ENCODE measurements at regions of chr21 and their contacts with region 1.

Region 1: GRCh38 chr21:26783466-26784195 is 61.6 kb downstream of the ADAMTS1 start:
- DNase-seq: no peak
- ATAC-seq: no peak
- H3K4me3 ChIP-seq: no peak overlapping the region
- H3K27ac ChIP-seq: peak overlapping the region; percentile 59 to 74 (median 60)
- H3K4me1 ChIP-seq: peaks cover 6 to 22% of the 10 kb centered on the region in 2 donors
- H3K27me3 ChIP-seq: no peaks in the 10 kb centered on the region
- CTCF ChIP-seq: no peak
- POLR2A ChIP-seq: no peak

Region 2: GRCh38 chr21:26801524-26801923 is 17.9 kb after region 1 on chr21:
- in situ Hi-C with region 1: no loop called
- intact Hi-C with region 1: loop called (anchors 2 kb)
- DNase-seq: no peak
- ATAC-seq: peak in 1 of 2 donors; percentile 31
- H3K4me3 ChIP-seq: peak overlapping the region in 2 of 4 donors; percentile 29 to 32
- H3K27ac ChIP-seq: peak overlapping the region; percentile 57 to 77 (median 69)
- H3K4me1 ChIP-seq: peaks cover 12 to 15% of the 10 kb centered on the region in 2 donors
- H3K27me3 ChIP-seq: no peaks in the 10 kb centered on the region
- CTCF ChIP-seq: no peak
- POLR2A ChIP-seq: peak; percentile 16 to 32

Region 3: GRCh38 chr21:26918318-26919065 is 134.9 kb after region 1 on chr21:
- in situ Hi-C with region 1: no loop called
- intact Hi-C with region 1: no loop called
- DNase-seq: no peak
- ATAC-seq: no peak
- H3K4me3 ChIP-seq: no peak overlapping the region
- H3K27ac ChIP-seq: no peak overlapping the region
- H3K4me1 ChIP-seq: no peaks in the 10 kb centered on the region
- H3K27me3 ChIP-seq: no peaks in the 10 kb centered on the region
- CTCF ChIP-seq: no peak
- POLR2A ChIP-seq: no peak

Measured in gastrocnemius medialis (tissue), 4 donors.